ENCODE measurements at regions of chr1 and their contacts with region 1.

Region 1: DNA sequence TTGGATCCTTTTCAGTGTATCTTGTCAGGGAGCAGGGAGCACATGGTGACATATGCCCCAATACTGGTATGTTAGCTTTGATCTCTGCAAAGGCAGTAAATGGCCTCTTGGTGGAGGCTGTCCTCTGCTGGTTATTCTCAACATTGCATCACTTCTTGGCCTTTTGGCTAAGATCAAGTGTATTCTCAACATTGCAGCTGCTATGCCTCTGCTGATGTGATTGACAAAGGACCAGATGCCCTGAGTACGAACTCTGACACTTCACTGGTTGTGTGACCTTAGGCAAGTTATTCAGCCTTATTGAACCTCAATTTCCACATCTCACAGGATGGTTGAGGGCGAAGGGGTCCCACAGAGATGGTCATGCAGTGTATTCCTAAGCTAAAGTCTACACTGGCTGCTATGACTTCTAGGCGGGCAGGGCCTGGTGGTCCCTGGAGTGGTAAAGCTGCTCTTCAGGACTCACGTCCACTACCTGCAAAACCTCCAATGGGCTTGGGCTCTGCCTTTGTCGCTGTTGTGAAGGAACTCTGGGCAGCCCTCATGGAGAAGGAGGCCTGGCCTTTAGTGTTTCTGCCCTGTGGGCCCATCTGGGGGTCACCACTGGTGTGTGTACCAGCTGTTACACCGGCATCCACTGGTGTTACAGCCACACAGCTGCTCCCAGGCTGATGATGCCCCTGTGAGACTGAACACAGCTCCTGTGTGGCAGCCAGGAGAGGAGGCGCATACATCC is 64.8 kb downstream of the DNTTIP2 start:
- DNase-seq: peak; percentile 78
- H3K4me3 ChIP-seq: no peak overlapping the region
- H3K27ac ChIP-seq: peak overlapping the region; percentile 76
- H3K4me1 ChIP-seq: peaks cover 75% of the 10 kb centered on the region
- H3K27me3 ChIP-seq: no peaks in the 10 kb centered on the region
- CTCF ChIP-seq: peak; percentile 100

Region 2: GRCh38 chr1:93629099-93630059 is 184.8 kb before region 1 on chr1:
- CTCF ChIA-PET with region 1: interaction called, 24 read pairs
- dilution Hi-C with region 1: no loop called
- in situ Hi-C with region 1: no loop called
- intact Hi-C with region 1: loop called (anchors 1 kb)
- DNase-seq: peak; percentile 59
- H3K4me3 ChIP-seq: no peak overlapping the region
- H3K27ac ChIP-seq: peak overlapping the region; percentile 35
- H3K4me1 ChIP-seq: peaks cover 65% of the 10 kb centered on the region
- H3K27me3 ChIP-seq: no peaks in the 10 kb centered on the region
- CTCF ChIP-seq: peak; percentile 74 to 78

Region 3: GRCh38 chr1:93659822-93660503 is 154.3 kb before region 1 on chr1:
- CTCF ChIA-PET with region 1: interaction called, 3 read pairs
- dilution Hi-C with region 1: loop called (anchors 5 kb)
- in situ Hi-C with region 1: no loop called
- intact Hi-C with region 1: no loop called
- DNase-seq: no peak
- H3K4me3 ChIP-seq: no peak overlapping the region
- H3K27ac ChIP-seq: no peak overlapping the region
- H3K4me1 ChIP-seq: peaks cover 37% of the 10 kb centered on the region
- H3K27me3 ChIP-seq: no peaks in the 10 kb centered on the region
- CTCF ChIP-seq: no peak

Region 4: DNA sequence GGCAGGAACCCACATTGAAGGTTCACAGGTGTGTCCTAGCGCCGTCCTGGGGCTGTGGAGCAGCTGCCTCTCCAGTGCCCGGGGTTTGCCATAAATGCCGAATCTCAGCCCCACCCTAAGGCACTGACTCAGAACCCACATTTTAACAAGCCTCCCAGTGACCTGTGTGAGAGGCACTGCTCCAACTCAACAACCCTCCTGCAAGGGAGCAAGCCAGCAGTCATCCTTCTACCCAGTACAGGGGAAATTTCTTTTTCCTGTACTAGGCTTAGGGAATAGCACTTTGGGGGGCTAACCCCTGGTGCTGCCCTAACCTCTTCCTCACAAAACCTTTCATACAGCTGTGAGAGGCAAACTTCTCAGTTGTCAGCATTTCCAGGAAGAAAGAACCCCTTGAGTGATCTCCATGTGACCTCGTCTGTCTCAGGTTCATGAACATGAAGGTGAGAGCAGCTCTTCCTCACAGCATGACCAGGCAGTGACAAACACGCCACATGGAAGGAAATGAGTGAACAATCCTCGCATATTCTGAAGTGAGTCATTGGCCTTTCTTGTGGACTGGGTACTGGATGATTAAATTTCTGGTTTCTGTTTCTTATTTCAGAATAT is 121.1 kb before region 1 on chr1:
- CTCF ChIA-PET with region 1: interaction called, 5 read pairs
- dilution Hi-C with region 1: no loop called
- in situ Hi-C with region 1: no loop called
- intact Hi-C with region 1: loop called (anchors 1 kb)
- DNase-seq: peak; percentile 97
- H3K4me3 ChIP-seq: peak overlapping the region in 1 of 3 experiments; percentile 4
- H3K27ac ChIP-seq: peak overlapping the region; percentile 100
- H3K4me1 ChIP-seq: peaks cover 53% of the 10 kb centered on the region
- H3K27me3 ChIP-seq: no peaks in the 10 kb centered on the region
- CTCF ChIP-seq: no peak

Region 5: DNA sequence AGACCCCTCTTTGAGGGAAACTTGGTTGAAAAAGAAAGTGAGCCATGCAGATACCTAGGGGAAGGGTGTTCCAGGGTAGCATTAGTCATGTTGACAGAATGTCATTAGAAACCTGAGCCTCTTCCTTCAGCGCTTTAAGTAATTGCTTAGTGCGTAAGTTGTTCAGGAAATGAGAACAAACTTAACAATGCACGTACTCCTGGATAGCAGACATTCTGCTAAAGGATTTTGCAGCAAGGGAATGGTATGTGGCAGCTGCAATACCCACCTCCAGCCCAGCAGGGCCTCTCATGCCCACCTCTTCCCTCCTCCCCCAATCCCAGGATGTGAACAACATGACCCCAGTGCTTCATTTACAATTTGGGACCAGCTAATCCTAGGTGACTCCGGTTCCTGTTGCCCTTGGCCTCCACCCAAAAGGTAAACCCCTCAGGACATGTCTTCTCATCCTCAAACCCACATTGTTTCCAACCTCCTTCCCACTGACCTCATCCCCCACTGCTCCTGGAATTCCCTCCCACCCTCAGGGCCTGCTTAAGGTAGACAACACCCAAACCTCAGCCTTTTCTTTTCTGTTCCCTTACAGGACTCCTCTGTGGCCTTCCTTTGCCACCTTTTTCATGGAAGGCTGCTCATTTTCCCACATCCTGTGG is 34.6 kb before region 1 on chr1:
- CTCF ChIA-PET with region 1: interaction called, 7 read pairs
- dilution Hi-C with region 1: loop called (anchors 5 kb)
- in situ Hi-C with region 1: no loop called
- intact Hi-C with region 1: loop called (anchors 1 kb)
- DNase-seq: peak; percentile 100
- H3K4me3 ChIP-seq: no peak overlapping the region
- H3K27ac ChIP-seq: peak overlapping the region; percentile 99
- H3K4me1 ChIP-seq: peaks cover 58% of the 10 kb centered on the region
- H3K27me3 ChIP-seq: no peaks in the 10 kb centered on the region
- CTCF ChIP-seq: peak in 1 of 2 donors; percentile 22